Posterior vena cava (tissue), 2 donors: ENCODE measurements at regions of chr3 and their contacts with region 1.

Region 1: DNA sequence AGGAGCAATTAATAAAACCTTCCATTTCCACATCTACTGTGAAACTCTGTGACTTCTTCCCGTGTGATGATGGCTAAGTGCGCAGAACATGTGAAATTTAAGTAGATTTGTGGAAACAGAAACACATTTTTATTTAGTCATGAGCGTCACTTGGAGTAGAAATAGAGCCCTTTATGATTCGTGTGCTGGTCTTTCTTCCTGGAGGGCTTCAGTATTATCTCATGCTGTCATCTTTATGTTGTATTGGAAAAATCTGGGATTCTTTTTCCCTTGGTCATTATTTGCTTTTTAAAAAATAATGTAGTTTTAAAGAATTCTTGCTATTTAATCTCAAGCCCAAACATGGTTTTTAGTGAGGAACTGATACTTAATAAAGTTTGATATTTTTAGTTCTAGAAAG is 284.0 kb upstream of the CTDSPL start:
- DNase-seq: no peak

Region 2: DNA sequence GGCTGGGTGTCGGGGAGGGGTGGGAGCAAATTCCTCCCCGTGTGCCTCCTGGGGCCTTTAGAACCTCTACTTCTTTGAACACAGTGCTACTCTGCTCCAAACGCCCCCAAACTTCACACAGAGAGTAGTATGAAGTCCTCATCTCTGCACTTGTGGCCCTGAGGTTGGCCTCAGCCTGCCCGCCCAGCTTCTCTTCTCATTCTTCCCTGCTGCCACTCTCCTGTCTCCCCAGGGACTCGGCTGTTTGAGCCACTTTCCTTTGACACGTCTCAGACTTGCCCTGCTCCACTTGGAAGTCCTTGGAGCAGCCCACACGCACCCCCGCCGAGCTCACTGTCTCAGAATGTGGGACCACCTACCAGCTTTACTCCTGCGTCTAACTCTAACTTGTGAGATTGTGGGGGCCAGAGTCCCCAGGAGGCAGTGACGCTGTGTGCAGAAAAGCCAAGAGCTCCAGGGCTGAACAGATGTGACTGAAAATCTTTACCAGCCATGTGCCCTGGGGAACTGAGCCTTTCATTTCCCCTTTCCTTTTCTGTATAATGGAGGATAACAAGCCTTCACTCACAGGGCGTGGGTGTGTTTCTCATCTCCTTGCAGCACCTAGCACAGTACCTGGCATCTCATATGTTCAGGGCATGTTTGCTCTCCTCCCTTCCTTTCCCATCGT is 50.4 kb after region 1 on chr3:
- intact Hi-C with region 1: loop called in 1 of 2 experiments (anchors 1 kb)
- DNase-seq: no peak